ENCODE measurements at regions of chr15 and their contacts with region 1.

Region 1: DNA sequence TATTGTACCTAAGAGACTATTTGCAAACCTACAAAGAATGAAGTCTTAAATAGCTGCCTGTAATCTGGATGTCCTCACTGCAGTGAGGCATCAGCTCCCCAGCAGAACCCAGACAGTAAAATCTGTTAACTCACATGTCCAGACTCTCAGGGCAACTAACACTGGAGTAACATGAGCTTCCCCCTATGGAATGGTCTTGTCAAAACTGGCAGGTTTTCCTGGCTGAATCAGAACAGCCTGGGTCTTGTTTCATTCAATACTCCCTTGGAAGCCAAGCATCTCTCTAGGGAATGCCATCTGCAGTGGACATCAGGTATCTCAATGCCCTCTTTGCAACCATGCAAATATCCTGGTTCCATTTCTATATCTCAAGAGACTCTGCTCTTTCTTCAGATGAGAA is 24.4 kb downstream of the PTPN9 start:
- DNase-seq: no peak
- ATAC-seq: no peak
- H3K4me3 Mint-ChIP-seq: no peak overlapping the region
- H3K27ac Mint-ChIP-seq: peak overlapping the region; percentile 60; the same call in 1 of the 2 replicates
- H3K4me1 Mint-ChIP-seq: peaks cover 7% of the 10 kb centered on the region
- H3K27me3 Mint-ChIP-seq: no peaks in the 10 kb centered on the region
- CTCF ChIP-seq: no peak

Region 2: DNA sequence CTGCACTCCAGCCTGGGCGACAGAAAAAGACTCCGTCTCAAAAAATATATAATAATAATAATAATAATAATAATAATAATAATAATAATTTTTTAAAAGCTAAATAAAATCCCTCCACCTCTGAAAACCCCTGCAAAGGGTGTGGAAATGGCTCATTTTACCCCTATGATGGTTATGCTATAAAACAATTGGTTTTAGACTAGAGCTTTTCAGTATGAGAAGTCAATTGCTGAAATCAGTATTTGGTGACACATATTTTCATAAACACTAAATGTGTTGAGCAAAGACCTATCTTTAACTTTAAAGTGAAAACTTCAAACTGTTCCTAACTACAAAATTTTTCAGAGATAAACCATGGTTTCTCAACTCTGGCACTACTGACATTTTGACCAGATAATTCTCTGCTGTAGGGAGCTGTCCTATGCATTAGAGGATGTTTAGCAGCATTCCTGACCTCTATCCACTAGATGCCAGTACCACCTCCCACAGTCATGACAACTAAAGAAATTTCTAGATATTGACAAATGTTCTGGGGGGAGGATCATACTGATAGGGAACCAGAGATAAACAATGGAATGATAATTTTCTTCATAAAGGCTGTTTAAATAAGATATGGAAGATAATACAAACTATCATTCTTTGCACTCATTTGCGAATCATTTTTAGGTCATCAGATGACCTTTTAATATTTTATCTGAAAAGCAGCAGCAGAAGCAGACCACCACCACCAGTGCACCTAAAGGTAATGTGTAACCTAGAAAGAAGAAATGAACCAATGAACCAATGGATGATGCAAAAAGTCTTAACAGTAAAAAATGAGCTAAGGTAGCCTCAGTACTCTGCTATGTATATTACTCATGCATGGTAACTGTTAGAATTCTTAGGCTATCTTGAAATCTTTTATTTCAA is 10.6 kb after region 1 on chr15:
- CTCF ChIA-PET with region 1: no interaction called
- POLR2A ChIA-PET with region 1: interaction called, 11 read pairs
- DNase-seq: no peak
- ATAC-seq: no peak
- H3K4me3 Mint-ChIP-seq: no peak overlapping the region
- H3K27ac Mint-ChIP-seq: no peak overlapping the region; the same call in 1 of the 2 replicates
- H3K4me1 Mint-ChIP-seq: peaks cover 15% of the 10 kb centered on the region
- H3K27me3 Mint-ChIP-seq: no peaks in the 10 kb centered on the region
- CTCF ChIP-seq: no peak

Measured in WTC11 (cell line).